Activated CD4-positive, alpha-beta memory T cell treated with anti-CD3 and anti-CD28 coated beads for 36 hours (primary cell): ENCODE measurements at regions of chr9 and their contacts with region 1.

Region 1: DNA sequence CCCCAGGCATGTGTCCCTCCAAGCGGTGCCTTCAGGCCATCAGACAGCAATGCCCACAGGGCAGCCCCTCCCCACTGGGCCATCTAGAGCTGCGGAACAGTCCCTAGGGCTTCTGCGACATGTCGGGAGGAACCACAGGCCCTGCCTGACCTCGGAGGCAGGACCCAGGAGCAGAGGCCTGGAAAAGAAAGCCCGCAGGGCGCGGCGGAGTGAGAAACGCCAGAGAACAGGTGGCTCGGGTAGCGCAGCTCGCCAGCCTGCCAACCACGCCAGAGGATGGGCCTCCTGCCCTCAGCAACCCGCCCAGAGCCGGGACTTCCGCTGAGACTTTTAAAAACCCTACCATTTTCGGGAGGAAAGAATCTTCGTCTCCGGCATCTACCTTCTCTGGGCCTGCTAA is 715 bp downstream of the LCN8 start:
- DNase-seq: no peak
- H3K4me3 Mint-ChIP-seq: no peak overlapping the region
- H3K27ac Mint-ChIP-seq: no peak overlapping the region
- H3K4me1 Mint-ChIP-seq: no peaks in the 10 kb centered on the region
- H3K27me3 Mint-ChIP-seq: peaks cover 19% of the 10 kb centered on the region

Region 2: GRCh38 chr9:136700959-136701667 is 56.2 kb before region 1 on chr9:
- CTCF ChIA-PET with region 1: no interaction called
- POLR2A ChIA-PET with region 1: no interaction called
- intact Hi-C with region 1: loop called (anchors 10 kb)
- DNase-seq: peak; percentile 90
- H3K4me3 Mint-ChIP-seq: peak overlapping the region; percentile 71
- H3K27ac Mint-ChIP-seq: peak overlapping the region; percentile 86
- H3K4me1 Mint-ChIP-seq: peaks cover 18% of the 10 kb centered on the region
- H3K27me3 Mint-ChIP-seq: peaks cover 23% of the 10 kb centered on the region

Region 3: GRCh38 chr9:136734837-136735496 is 22.4 kb before region 1 on chr9:
- CTCF ChIA-PET with region 1: no interaction called
- POLR2A ChIA-PET with region 1: no interaction called
- intact Hi-C with region 1: no loop called
- DNase-seq: peak; percentile 51
- H3K4me3 Mint-ChIP-seq: no peak overlapping the region
- H3K27ac Mint-ChIP-seq: no peak overlapping the region
- H3K4me1 Mint-ChIP-seq: peaks cover 9% of the 10 kb centered on the region
- H3K27me3 Mint-ChIP-seq: no peaks in the 10 kb centered on the region

Region 4: DNA sequence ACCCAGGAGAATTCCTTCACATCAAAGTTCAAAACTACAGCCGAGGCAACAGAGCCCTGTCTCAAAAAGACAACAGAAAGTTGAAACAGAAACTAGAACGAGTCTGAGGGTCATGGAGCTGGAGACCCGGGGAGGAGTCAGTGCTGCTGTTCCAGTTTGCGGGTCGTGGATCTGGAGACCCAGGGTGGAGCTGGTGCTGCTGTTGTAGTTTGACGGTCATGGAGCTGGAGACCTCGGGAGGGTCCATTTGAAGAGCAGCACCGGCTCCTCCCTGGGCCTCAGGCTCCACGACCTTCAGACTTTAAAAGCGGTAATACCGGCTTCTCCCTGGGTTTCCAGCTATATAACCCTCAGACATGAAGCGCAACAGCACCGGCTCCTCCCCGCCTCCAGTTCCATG is 20.0 kb after region 1 on chr9:
- CTCF ChIA-PET with region 1: interaction called, 17 read pairs
- POLR2A ChIA-PET with region 1: no interaction called
- intact Hi-C with region 1: no loop called
- DNase-seq: no peak
- H3K4me3 Mint-ChIP-seq: no peak overlapping the region
- H3K27ac Mint-ChIP-seq: no peak overlapping the region
- H3K4me1 Mint-ChIP-seq: no peaks in the 10 kb centered on the region
- H3K27me3 Mint-ChIP-seq: peaks cover 12% of the 10 kb centered on the region

Region 5: DNA sequence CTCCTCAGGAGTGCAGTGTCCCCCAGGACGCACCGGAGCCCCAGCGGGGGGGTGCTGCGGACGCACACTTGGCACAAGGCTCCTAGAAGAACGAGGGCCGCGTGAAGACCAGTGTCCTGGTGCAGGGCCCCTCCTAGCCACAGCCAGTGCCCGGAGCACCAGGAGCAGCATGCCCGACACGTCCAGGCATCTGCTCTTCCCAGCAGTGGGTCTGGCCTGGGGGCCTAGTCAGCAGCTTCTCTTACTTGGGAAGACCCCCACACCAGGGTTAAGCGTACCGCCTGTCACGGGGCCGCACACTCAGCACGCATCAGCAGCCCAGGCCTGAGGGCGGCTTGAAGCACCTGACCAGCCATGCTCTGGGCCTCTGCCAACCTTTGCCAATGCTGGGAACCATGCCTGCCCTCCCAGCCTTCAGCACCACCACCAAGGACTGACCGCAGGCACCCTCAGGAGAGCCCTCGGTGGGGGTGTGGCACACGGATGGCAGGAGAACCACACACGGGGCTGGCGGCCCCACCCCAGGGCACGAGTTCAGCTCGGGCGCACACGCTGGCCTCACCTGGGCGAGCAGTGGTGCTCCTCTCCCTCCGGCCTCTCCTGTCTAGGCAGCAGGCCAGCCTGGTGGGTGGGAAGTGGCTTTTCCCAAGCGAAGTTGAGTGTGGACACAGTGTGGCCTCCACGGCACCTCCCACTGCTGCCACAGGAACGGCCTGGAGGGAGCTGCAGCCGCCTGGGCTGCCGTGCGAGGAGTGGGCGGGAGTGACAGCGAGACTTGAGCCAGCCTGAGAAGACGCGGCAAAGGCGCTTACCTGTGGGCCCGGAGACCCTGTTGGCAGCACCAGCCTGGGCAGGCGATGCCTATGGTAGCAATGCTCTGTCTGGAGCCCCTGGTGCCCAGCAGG is 72.9 kb after region 1 on chr9:
- CTCF ChIA-PET with region 1: no interaction called
- POLR2A ChIA-PET with region 1: no interaction called
- intact Hi-C with region 1: no loop called
- DNase-seq: no peak
- H3K4me3 Mint-ChIP-seq: no peak overlapping the region
- H3K27ac Mint-ChIP-seq: no peak overlapping the region
- H3K4me1 Mint-ChIP-seq: no peaks in the 10 kb centered on the region
- H3K27me3 Mint-ChIP-seq: no peaks in the 10 kb centered on the region